H1 (cell line): ENCODE measurements at regions of chr11 and their contacts with region 1.

Region 1: GRCh38 chr11:45110562-45110961 is 35.9 kb upstream of the PRDM11 start:
- DNase-seq: peak in 1 of 2 experiments; percentile 56
- H3K4me3 ChIP-seq: no peak overlapping the region
- H3K27ac ChIP-seq: no peak overlapping the region
- H3K4me1 ChIP-seq: no peaks in the 10 kb centered on the region; a peak in 1 of 7 replicates
- H3K27me3 ChIP-seq: no peaks in the 10 kb centered on the region
- CTCF ChIP-seq: peak; percentile 22 to 82 (median 80)
- EP300 ChIP-seq: no peak
- POLR2A ChIP-seq: no peak
- RAD21 ChIP-seq: peak; percentile 91 to 94

Region 2: DNA sequence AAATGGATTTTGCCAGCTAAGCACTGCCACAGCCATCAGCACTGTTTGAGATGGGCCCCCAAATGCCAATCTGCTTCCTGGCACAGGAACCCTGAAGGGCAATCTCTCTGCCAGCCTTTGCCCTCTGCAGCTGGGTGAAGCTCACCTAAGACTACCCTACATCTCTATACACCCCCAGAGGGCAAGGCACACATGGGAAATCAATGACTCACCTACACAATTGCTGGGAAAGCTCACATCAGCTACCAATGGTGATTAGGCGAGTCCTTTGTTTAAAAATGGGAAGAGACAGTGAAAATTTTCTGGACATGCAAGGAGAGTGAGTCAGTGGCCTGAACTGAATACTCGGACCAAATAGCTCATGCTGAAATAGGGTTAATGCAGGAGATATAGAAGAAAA is 23.3 kb after region 1 on chr11:
- CTCF ChIA-PET with region 1: interaction called, 34 read pairs
- POLR2A ChIA-PET with region 1: no interaction called
- DNase-seq: no peak
- H3K4me3 ChIP-seq: no peak overlapping the region
- H3K27ac ChIP-seq: no peak overlapping the region
- H3K4me1 ChIP-seq: no peaks in the 10 kb centered on the region
- H3K27me3 ChIP-seq: peaks cover 0 to 2% (median 0%) of the 10 kb centered on the region in 4 experiments; a peak in 2 of 7 replicates
- CTCF ChIP-seq: no peak
- EP300 ChIP-seq: no peak
- POLR2A ChIP-seq: no peak
- RAD21 ChIP-seq: no peak

Region 3: GRCh38 chr11:45158198-45158731 is 47.7 kb after region 1 on chr11:
- CTCF ChIA-PET with region 1: interaction called, 11 read pairs
- POLR2A ChIA-PET with region 1: no interaction called
- DNase-seq: no peak
- H3K4me3 ChIP-seq: no peak overlapping the region
- H3K27ac ChIP-seq: no peak overlapping the region
- H3K4me1 ChIP-seq: peaks cover 0 to 6% (median 1%) of the 10 kb centered on the region in 4 experiments; a peak in 2 of 7 replicates
- H3K27me3 ChIP-seq: no peaks in the 10 kb centered on the region
- CTCF ChIP-seq: no peak
- EP300 ChIP-seq: no peak
- POLR2A ChIP-seq: no peak
- RAD21 ChIP-seq: no peak

Region 4: DNA sequence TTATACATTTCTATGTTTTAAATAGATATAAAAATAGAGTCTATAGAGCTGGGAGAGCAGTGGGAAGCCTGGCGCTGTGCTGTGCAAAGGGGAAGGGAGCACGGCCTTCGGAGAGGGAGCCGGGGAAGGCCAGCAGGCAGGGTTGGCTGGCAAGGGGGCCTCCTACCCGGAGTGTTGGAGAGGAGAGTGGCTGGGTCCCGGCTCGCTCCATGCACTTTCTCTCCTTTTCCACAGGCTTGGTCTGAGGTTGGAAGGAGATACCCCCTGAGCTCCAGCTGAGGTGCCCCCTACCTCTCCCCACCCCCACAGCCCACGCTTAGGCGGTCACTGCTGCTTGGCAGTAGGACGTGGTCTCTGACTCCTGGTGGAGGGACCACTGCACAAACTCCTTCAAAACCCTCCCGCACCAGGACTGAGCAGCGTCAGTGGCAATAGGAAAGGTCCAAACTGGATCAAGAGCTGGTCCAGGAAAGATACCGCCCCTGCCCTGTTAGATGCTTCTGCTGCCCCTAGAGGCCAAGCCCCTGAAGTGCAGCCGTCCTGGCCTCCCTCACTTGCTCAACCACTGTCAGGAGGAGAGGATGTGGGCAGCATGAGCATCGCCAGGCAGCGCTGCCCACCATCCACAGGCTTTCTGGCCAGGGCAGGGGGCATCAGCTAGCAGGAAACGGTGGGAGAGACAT is 122.7 kb after region 1 on chr11:
- CTCF ChIA-PET with region 1: interaction called, 28 read pairs
- POLR2A ChIA-PET with region 1: no interaction called
- DNase-seq: peak; percentile 53 to 94
- H3K4me3 ChIP-seq: peak overlapping the region in 1 of 4 experiments; percentile 22; a peak in 1 of 8 replicates
- H3K27ac ChIP-seq: no peak overlapping the region
- H3K4me1 ChIP-seq: peaks cover 0 to 4% (median 2%) of the 10 kb centered on the region in 4 experiments; a peak in 2 of 7 replicates
- H3K27me3 ChIP-seq: no peaks in the 10 kb centered on the region
- CTCF ChIP-seq: peak; percentile 73 to 98 (median 94)
- EP300 ChIP-seq: no peak
- POLR2A ChIP-seq: no peak
- RAD21 ChIP-seq: peak; percentile 52 to 59

Region 5: DNA sequence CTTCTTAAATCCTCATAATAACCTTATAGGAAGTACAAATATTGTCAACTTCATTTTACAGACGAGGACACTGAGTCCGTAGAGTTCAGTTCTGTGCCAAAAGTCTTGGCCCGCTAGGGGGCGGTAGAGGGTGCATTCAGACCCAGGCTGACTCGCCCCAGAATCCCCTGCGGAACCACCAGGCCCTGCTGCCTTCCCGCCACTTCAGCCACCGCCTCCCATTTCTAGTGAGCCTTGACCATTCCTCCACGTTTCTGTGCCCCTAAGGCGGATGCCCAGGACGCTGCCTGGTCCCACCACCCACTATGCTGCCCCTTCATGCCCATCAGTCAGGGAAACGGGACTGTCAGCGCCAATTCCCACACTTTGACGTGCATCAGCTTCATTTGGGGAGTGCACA is 156.5 kb after region 1 on chr11:
- CTCF ChIA-PET with region 1: interaction called, 19 read pairs
- POLR2A ChIA-PET with region 1: no interaction called
- DNase-seq: peak in 1 of 2 experiments; percentile 97
- H3K4me3 ChIP-seq: no peak overlapping the region
- H3K27ac ChIP-seq: no peak overlapping the region
- H3K4me1 ChIP-seq: peaks cover 0 to 2% (median 0%) of the 10 kb centered on the region in 4 experiments; a peak in 1 of 7 replicates
- H3K27me3 ChIP-seq: peaks cover 0 to 7% (median under 1%) of the 10 kb centered on the region in 4 experiments; a peak in 3 of 7 replicates
- CTCF ChIP-seq: peak; percentile 82 to 86 (median 84)
- EP300 ChIP-seq: no peak
- POLR2A ChIP-seq: no peak
- RAD21 ChIP-seq: peak; percentile 61 to 65

Region 6: DNA sequence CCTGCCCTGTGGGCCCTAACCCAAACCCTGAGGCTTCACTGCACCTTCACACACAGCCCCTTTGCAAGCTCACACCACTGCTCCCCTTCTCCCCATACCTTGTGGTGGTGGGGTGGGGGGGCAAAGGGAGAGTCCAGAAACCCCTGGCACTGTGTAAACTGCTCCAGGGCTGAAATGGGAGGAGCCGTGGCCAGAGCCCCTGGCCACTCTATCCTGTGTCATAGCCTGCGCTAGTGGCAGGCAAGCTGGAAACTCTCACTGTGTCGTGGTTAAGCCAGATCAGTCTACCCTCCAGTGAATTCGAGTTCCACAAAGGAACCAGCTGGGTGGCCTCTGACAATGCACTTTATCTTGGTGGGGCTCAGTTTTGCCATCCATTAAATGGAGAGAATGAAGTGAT is 183.9 kb after region 1 on chr11:
- CTCF ChIA-PET with region 1: interaction called, 14 read pairs
- POLR2A ChIA-PET with region 1: interaction called, 3 read pairs
- DNase-seq: no peak
- H3K4me3 ChIP-seq: no peak overlapping the region
- H3K27ac ChIP-seq: no peak overlapping the region
- H3K4me1 ChIP-seq: peaks cover 0 to 3% (median 1%) of the 10 kb centered on the region in 4 experiments; a peak in 3 of 7 replicates
- H3K27me3 ChIP-seq: peaks cover 0 to under 1% (median 0%) of the 10 kb centered on the region in 4 experiments; a peak in 3 of 7 replicates
- CTCF ChIP-seq: no peak
- EP300 ChIP-seq: no peak
- POLR2A ChIP-seq: no peak
- RAD21 ChIP-seq: no peak